Caco-2 (cell line): ENCODE measurements at regions of chr4 and their contacts with region 1.

Region 1: DNA sequence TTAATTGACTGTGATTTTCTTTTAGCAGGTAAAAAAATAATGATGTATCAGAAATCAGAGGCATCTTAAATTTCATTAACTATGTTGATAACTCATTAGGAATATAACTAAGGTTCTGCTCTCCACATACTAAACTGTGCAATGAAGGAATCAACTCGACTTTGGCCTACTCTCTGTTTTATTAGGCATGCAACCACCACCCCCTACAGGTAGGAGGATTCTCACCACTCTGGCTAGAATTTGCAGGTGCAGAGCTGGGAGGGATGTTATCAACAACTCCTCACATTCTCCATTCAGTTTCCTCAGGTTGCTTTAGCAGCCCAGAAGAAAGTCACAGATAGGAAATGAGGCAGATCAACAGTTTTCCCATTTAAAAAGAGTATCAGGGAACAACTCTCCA is 160.1 kb downstream of the COX18 start:
- DNase-seq: peak; percentile 38 to 63
- H3K4me3 ChIP-seq: no peak overlapping the region
- H3K4me3 Mint-ChIP-seq: no peak overlapping the region
- H3K27ac Mint-ChIP-seq: no peak overlapping the region
- H3K4me1 ChIP-seq: no peaks in the 10 kb centered on the region
- H3K4me1 Mint-ChIP-seq: no peaks in the 10 kb centered on the region
- H3K27me3 ChIP-seq: no peaks in the 10 kb centered on the region
- H3K27me3 Mint-ChIP-seq: no peaks in the 10 kb centered on the region
- CTCF ChIP-seq: peak; percentile 34 to 53

Region 2: DNA sequence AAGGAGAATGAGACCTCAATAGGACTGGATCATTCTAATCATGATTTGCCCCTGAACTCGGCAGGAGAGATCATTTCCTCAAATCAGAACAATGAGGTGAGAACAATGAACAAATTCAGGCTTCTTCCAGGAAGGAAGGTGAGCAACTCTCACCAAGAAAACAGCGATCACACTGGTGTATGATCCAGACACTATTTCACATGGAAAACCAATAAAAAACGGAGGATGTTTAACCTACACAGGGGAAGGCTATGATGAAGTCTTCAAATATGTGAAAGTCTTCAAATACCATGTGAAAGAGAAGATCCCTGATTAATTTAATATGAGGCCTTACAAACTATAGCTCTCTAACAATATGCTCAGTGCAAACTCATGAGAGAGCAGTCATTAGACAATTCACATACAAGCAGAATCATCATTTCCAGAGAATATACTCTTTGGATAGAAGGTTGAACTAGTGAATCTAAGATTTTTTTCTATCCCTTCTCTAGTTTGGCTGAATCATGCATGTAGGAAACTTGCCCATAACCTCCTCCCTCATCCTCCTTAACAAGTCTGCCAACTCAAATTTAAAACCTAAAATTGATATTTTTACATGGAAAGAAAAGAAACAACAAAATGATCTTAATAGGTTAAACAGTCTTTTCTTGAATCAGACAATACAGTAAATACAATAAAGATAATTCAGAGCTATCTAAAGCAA is 463.0 kb before region 1 on chr4:
- CTCF ChIA-PET with region 1: no interaction called
- POLR2A ChIA-PET with region 1: no interaction called
- intact Hi-C with region 1: no loop called
- DNase-seq: no peak
- H3K4me3 ChIP-seq: no peak overlapping the region
- H3K4me3 Mint-ChIP-seq: no peak overlapping the region
- H3K27ac Mint-ChIP-seq: no peak overlapping the region
- H3K4me1 ChIP-seq: no peaks in the 10 kb centered on the region
- H3K4me1 Mint-ChIP-seq: no peaks in the 10 kb centered on the region
- H3K27me3 ChIP-seq: no peaks in the 10 kb centered on the region
- H3K27me3 Mint-ChIP-seq: peaks cover 13% of the 10 kb centered on the region
- CTCF ChIP-seq: no peak

Region 3: DNA sequence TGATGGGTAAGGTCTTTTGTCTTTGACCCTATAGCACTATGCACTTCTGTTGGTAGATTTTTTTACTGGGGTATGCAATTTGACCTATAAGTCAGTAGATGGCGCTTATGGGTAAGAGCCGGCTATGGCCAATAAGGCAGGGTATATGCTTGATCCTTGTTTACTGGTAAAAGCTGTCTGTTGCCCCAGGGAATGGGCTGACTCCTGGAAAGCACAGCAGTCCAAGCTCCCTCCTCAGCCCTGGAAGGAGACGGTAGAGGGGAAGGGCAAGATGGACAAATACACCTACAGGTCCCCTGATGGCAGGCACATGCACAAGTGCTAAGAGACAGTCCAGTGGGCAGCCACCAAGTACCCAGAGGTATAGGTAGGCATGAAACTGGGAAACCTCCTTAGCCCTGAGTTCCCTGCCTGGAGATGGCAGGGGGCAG is 404.1 kb before region 1 on chr4:
- CTCF ChIA-PET with region 1: interaction called, 3 read pairs
- POLR2A ChIA-PET with region 1: no interaction called
- intact Hi-C with region 1: loop called (anchors 1 kb)
- DNase-seq: peak in 1 of 2 experiments; percentile 15
- H3K4me3 ChIP-seq: no peak overlapping the region
- H3K4me3 Mint-ChIP-seq: no peak overlapping the region
- H3K27ac Mint-ChIP-seq: no peak overlapping the region
- H3K4me1 ChIP-seq: no peaks in the 10 kb centered on the region
- H3K4me1 Mint-ChIP-seq: no peaks in the 10 kb centered on the region
- H3K27me3 ChIP-seq: no peaks in the 10 kb centered on the region
- H3K27me3 Mint-ChIP-seq: peaks cover 6% of the 10 kb centered on the region
- CTCF ChIP-seq: peak; percentile 45 to 54

Region 4: DNA sequence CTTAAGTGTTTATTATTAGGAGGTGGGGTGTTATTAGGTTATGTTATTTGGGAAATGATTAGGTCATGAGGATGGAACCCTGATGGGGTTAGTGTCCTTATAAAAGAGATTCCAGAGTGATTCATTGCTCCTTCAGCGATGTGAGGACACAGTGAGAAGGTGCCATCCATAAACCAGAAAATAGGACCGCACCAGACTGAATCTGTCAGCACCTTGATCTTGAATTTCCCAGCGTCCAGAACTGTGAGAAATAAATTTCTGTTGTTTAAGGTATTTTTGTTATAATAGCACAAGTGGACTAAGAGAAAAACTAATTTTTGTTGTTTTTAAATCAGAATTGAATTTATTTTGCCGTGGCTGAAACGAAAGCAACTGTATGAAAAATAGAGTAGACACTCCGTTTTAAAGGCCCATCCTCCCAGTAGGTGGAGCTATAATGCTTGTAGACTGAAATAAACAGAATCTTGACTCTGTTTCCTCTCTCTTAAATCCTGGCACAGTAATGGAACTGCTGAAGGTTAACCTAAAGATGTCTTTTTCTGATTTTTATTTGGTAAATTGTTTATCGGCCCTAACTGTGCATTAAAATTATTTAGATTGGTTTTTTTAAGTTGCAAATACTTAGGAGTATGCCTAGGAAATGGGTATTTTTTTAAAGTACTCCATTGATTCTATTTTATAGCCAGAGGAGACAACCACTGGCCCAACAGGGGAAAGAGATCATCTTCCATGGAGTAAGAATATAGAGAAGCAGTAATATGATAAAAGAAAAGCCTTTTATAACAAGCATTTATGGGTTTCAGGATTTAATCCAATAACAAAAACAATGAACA is 207.3 kb before region 1 on chr4:
- CTCF ChIA-PET with region 1: interaction called, 3 read pairs
- POLR2A ChIA-PET with region 1: no interaction called
- intact Hi-C with region 1: loop called (anchors 1 kb)
- DNase-seq: peak in 1 of 2 experiments; percentile 41
- H3K4me3 ChIP-seq: no peak overlapping the region
- H3K4me3 Mint-ChIP-seq: peak overlapping the region; percentile 48
- H3K27ac Mint-ChIP-seq: no peak overlapping the region
- H3K4me1 ChIP-seq: no peaks in the 10 kb centered on the region
- H3K4me1 Mint-ChIP-seq: no peaks in the 10 kb centered on the region
- H3K27me3 ChIP-seq: no peaks in the 10 kb centered on the region
- H3K27me3 Mint-ChIP-seq: peaks cover 6% of the 10 kb centered on the region
- CTCF ChIP-seq: peak; percentile 25 to 55